GM12878 (cell line): ENCODE measurements at regions of chr5 and their contacts with region 1.

Region 1: DNA sequence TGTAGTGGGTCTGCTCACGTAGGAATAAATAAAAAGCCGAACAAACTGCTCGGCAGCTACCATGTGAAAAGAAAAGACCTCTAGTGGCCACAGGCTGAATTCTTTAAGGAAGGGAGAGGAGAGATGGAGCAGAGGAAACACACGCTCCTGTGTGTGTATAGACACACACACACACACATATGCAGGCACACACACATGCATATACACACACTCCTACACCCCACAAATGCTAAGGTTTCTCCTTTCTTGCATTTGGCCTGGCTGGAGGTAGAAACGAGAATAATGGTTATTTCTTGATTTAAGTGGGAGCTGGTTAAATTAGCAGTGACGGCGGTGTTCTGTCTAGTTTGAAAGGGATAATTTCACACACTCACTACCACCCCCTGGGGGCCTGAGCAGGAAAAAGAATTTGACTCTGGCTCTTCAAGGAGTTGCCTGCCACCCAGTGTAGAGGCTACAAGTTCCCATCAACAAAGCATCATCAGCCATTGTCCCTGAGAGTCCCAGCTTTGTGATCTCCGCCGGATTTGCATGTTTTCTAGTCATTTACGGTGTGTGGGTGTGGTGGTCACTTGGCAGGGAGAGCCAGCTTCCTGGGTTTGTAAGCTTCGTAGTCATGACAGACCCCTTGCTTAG is at the start of gene INSYN2B:
- DNase-seq: no peak
- ATAC-seq: peak; percentile 90
- H3K4me3 ChIP-seq: no peak within 1 kb of the TSS
- H3K27ac ChIP-seq: no peak within 1 kb of the TSS
- H3K4me1 ChIP-seq: peaks cover 4% of the 10 kb centered on the region; the same call in 1 of the 2 replicates
- H3K27me3 ChIP-seq: no peaks in the 10 kb centered on the region
- CTCF ChIP-seq: peak in 2 of 3 experiments; percentile 33 to 71; a peak in 3 of 6 replicates
- EP300 ChIP-seq: no peak
- POLR2A ChIP-seq: no peak
- RAD21 ChIP-seq: peak; percentile 67
- polyA plus RNA-seq, gene INSYN2B: 0.05 TPM in 1 of 2 experiments, not detected in the other

Region 2: GRCh38 chr5:169695919-169696490 is 284.5 kb before region 1 on chr5:
- CTCF ChIA-PET with region 1: interaction called, 73 read pairs
- POLR2A ChIA-PET with region 1: interaction called, 3 read pairs
- RAD21 ChIA-PET with region 1: interaction called, 44 read pairs
- SMC1A ChIA-PET with region 1: interaction called, 41 read pairs
- in situ Hi-C with region 1: loop called (anchors 5 kb)
- intact Hi-C with region 1: loop called (anchors 1 kb)
- DNase-seq: no peak
- ATAC-seq: no peak
- H3K4me3 ChIP-seq: no peak overlapping the region
- H3K27ac ChIP-seq: no peak overlapping the region
- H3K4me1 ChIP-seq: no peaks in the 10 kb centered on the region
- H3K27me3 ChIP-seq: no peaks in the 10 kb centered on the region
- CTCF ChIP-seq: no peak
- EP300 ChIP-seq: no peak
- POLR2A ChIP-seq: no peak
- RAD21 ChIP-seq: no peak

Region 3: DNA sequence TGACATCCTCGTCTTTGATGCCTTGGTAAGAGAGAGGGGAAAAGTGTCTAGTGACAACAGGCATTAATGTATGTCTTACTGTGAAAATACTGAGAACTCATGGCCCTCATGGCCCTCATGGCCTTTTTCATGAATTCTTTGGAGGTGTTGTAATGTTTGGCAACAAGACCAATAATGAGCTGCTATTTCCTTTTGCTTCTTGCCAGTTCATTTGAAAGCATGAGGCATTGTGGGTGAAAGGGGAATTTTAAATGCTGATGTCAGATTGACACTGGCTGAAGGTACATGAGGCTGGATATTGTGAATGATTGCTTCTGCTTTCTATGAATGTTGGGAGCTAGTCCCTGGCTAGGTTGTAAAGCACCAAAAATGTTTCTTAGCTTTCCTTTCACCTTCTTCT is 264.3 kb before region 1 on chr5:
- CTCF ChIA-PET with region 1: interaction called, 32 read pairs
- POLR2A ChIA-PET with region 1: no interaction called
- RAD21 ChIA-PET with region 1: interaction called, 4 read pairs
- SMC1A ChIA-PET with region 1: interaction called, 12 read pairs
- in situ Hi-C with region 1: no loop called
- intact Hi-C with region 1: no loop called
- DNase-seq: no peak
- ATAC-seq: peak; percentile 11; the same call in 2 of the 3 replicates
- H3K4me3 ChIP-seq: no peak overlapping the region
- H3K27ac ChIP-seq: peak overlapping the region; percentile 22
- H3K4me1 ChIP-seq: peaks cover 17% of the 10 kb centered on the region
- H3K27me3 ChIP-seq: no peaks in the 10 kb centered on the region
- CTCF ChIP-seq: no peak
- EP300 ChIP-seq: no peak; a peak in 1 of 4 replicates
- POLR2A ChIP-seq: no peak
- RAD21 ChIP-seq: no peak

Region 4: DNA sequence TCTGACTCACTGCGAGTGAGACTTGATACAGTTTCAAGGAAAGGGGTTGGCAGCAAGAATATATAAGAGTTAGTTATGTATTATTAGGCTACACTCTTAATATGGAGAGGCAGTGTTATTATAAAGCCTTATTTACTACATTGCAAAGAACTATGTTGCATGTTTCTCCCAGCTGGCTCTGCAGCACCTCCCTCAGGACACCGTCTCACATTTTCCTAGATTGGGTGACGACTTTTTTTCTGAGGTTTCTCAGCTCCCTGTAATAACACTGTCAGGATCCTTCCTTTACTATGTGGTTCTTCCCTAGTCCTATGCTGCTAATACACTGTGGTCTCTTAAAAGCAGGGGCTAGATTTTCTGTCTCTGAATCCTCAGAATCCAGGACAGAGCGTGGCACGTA is 153.9 kb before region 1 on chr5:
- CTCF ChIA-PET with region 1: interaction called, 10 read pairs
- POLR2A ChIA-PET with region 1: no interaction called
- RAD21 ChIA-PET with region 1: no interaction called
- SMC1A ChIA-PET with region 1: interaction called, 3 read pairs
- in situ Hi-C with region 1: no loop called
- intact Hi-C with region 1: no loop called
- DNase-seq: no peak
- ATAC-seq: peak; percentile 60
- H3K4me3 ChIP-seq: no peak overlapping the region
- H3K27ac ChIP-seq: no peak overlapping the region
- H3K4me1 ChIP-seq: no peaks in the 10 kb centered on the region; the same call in 1 of the 2 replicates
- H3K27me3 ChIP-seq: no peaks in the 10 kb centered on the region
- CTCF ChIP-seq: peak; percentile 7 to 13 (median 12); a peak in 1 of 6 replicates
- EP300 ChIP-seq: no peak
- POLR2A ChIP-seq: no peak
- RAD21 ChIP-seq: peak; percentile 34; the same call in 1 of the 2 replicates

Region 5: GRCh38 chr5:169945831-169946261 is 34.7 kb before region 1 on chr5:
- CTCF ChIA-PET with region 1: interaction called, 12 read pairs
- POLR2A ChIA-PET with region 1: no interaction called
- RAD21 ChIA-PET with region 1: no interaction called
- SMC1A ChIA-PET with region 1: no interaction called
- in situ Hi-C with region 1: no loop called
- intact Hi-C with region 1: no loop called
- DNase-seq: no peak
- ATAC-seq: no peak
- H3K4me3 ChIP-seq: no peak overlapping the region
- H3K27ac ChIP-seq: no peak overlapping the region
- H3K4me1 ChIP-seq: no peaks in the 10 kb centered on the region
- H3K27me3 ChIP-seq: no peaks in the 10 kb centered on the region
- CTCF ChIP-seq: no peak
- EP300 ChIP-seq: no peak
- POLR2A ChIP-seq: no peak
- RAD21 ChIP-seq: no peak